Testis (tissue), 5 donors: ENCODE measurements at regions of chr2 and their contacts with region 1.

Region 1: GRCh38 chr2:130181325-130181879 is at the start of gene SMPD4:
- DNase-seq: peak; percentile 97
- H3K4me3 ChIP-seq: peak within 1 kb of the TSS; percentile 89 to 91
- H3K27ac ChIP-seq: peak within 1 kb of the TSS; percentile 78 to 87
- H3K4me1 ChIP-seq: peaks cover 23% of the 10 kb centered on the region
- H3K27me3 ChIP-seq: no peaks in the 10 kb centered on the region
- CTCF ChIP-seq: no peak
- POLR2A ChIP-seq: no peak
- total RNA-seq, gene SMPD4: 101 to 121 TPM

Region 2: DNA sequence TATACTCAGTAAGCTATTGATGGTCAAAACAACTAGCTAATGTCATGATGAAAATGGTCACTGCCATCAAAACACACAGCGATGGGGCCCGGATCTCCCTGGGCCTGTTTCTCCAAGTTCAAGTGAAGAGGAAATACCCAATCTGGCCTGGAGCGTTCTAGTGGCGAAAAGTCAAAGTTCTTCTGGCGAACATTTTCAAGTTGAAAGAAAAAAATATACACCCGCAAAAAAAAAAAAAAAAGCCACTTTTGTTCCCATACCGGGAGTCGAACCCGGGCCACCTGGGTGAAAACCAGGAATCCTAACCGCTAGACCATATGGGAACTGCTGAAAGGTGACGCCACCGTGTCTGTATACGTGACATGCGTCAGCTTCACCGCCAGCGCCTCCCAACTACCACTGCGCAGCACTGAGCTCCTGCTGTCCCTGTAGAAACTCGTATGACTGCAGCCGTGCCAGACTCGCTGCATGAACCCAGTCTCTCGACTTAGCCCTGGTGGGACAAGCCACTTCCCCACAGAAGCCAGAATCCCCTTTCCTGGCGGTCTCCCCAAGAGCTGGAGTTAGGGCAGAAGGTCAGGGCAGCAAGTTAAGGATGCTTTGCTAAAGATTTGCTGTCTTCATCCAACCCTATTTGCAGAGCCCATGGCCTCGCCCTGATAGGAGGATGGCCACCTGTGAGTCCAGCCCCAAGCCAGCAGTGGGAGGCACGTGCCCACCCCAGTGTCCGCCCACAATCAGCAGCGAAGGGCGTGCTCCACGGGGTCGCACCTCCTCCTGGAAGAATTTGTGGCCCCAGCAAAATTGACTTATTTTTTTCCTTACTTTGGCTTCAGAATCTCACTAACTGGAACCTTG is 155.7 kb after region 1 on chr2:
- intact Hi-C with region 1: loop called (anchors 5 kb)
- DNase-seq: no peak
- H3K4me3 ChIP-seq: no peak overlapping the region
- H3K27ac ChIP-seq: no peak overlapping the region
- H3K4me1 ChIP-seq: peaks cover 5% of the 10 kb centered on the region
- H3K27me3 ChIP-seq: no peaks in the 10 kb centered on the region
- CTCF ChIP-seq: no peak
- POLR2A ChIP-seq: no peak